B cell (primary cell): ENCODE measurements at regions of chr1 and their contacts with region 1.

Region 1: GRCh38 chr1:42335050-42335808 is at the start of gene FOXJ3:
- DNase-seq: peak; percentile 97
- ATAC-seq: peak; percentile 90
- H3K4me3 ChIP-seq: peak within 1 kb of the TSS; percentile 63 to 97 (median 89)
- H3K4me3 Mint-ChIP-seq: peak within 1 kb of the TSS; percentile 95
- H3K27ac ChIP-seq: peak within 1 kb of the TSS; percentile 75 to 91
- H3K27ac Mint-ChIP-seq: peak within 1 kb of the TSS; percentile 90
- H3K4me1 ChIP-seq: peaks cover 20 to 24% of the 10 kb centered on the region in 2 donors
- H3K4me1 Mint-ChIP-seq: peaks cover 44% of the 10 kb centered on the region
- H3K27me3 ChIP-seq: no peaks in the 10 kb centered on the region
- H3K27me3 Mint-ChIP-seq: no peaks in the 10 kb centered on the region
- CTCF ChIP-seq: no peak
- total RNA-seq, gene FOXJ3: 76.4 and 80.3 TPM in 2 replicates

Region 2: GRCh38 chr1:42035830-42036604 is 299.2 kb before region 1 on chr1:
- CTCF ChIA-PET with region 1: no interaction called
- POLR2A ChIA-PET with region 1: no interaction called
- intact Hi-C with region 1: loop called (anchors 5 kb)
- DNase-seq: peak; percentile 95
- ATAC-seq: peak; percentile 94
- H3K4me3 ChIP-seq: peak overlapping the region; percentile 13 to 93 (median 83)
- H3K4me3 Mint-ChIP-seq: peak overlapping the region; percentile 72
- H3K27ac ChIP-seq: peak overlapping the region in 1 of 2 donors; percentile 34
- H3K27ac Mint-ChIP-seq: peak overlapping the region; percentile 67
- H3K4me1 ChIP-seq: peaks cover 13 to 15% of the 10 kb centered on the region in 2 donors
- H3K4me1 Mint-ChIP-seq: peaks cover 12% of the 10 kb centered on the region
- H3K27me3 ChIP-seq: peaks cover 0 to 6% (median 0%) of the 10 kb centered on the region in 4 experiments
- H3K27me3 Mint-ChIP-seq: peaks cover 13% of the 10 kb centered on the region
- CTCF ChIP-seq: no peak

Region 3: DNA sequence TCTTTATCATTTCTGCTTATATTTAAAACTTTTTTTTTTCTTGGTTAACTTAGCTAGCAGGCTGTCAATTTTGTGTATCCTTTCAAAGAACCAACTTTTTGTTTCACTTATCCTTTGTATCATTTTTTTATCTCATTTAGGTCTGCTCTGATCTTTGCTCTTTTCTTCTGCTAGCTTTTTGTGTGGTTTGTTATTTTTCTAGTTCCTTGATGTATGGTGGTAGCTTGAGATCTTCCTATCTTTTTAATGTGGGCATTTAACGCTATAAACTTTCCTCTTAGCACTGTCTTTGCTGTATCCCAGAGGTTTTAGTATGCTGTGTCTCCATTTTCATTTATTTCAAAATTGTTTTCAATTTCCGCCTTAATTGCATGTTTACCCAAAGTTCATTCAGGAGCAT is 36.7 kb before region 1 on chr1:
- CTCF ChIA-PET with region 1: no interaction called
- POLR2A ChIA-PET with region 1: no interaction called
- intact Hi-C with region 1: no loop called
- DNase-seq: no peak
- ATAC-seq: no peak
- H3K4me3 ChIP-seq: no peak overlapping the region
- H3K4me3 Mint-ChIP-seq: no peak overlapping the region
- H3K27ac ChIP-seq: no peak overlapping the region
- H3K27ac Mint-ChIP-seq: no peak overlapping the region
- H3K4me1 ChIP-seq: no peaks in the 10 kb centered on the region
- H3K4me1 Mint-ChIP-seq: peaks cover 8% of the 10 kb centered on the region
- H3K27me3 ChIP-seq: no peaks in the 10 kb centered on the region
- H3K27me3 Mint-ChIP-seq: no peaks in the 10 kb centered on the region
- CTCF ChIP-seq: no peak

Region 4: GRCh38 chr1:42319128-42319851 is 15.9 kb before region 1 on chr1:
- CTCF ChIA-PET with region 1: no interaction called
- POLR2A ChIA-PET with region 1: no interaction called
- intact Hi-C with region 1: no loop called
- DNase-seq: no peak
- ATAC-seq: no peak
- H3K4me3 ChIP-seq: no peak overlapping the region
- H3K4me3 Mint-ChIP-seq: no peak overlapping the region
- H3K27ac ChIP-seq: peak overlapping the region in 1 of 2 donors; percentile 60
- H3K27ac Mint-ChIP-seq: no peak overlapping the region
- H3K4me1 ChIP-seq: peaks cover 14 to 18% of the 10 kb centered on the region in 2 donors
- H3K4me1 Mint-ChIP-seq: peaks cover 73% of the 10 kb centered on the region
- H3K27me3 ChIP-seq: no peaks in the 10 kb centered on the region
- H3K27me3 Mint-ChIP-seq: no peaks in the 10 kb centered on the region
- CTCF ChIP-seq: no peak

Region 5: DNA sequence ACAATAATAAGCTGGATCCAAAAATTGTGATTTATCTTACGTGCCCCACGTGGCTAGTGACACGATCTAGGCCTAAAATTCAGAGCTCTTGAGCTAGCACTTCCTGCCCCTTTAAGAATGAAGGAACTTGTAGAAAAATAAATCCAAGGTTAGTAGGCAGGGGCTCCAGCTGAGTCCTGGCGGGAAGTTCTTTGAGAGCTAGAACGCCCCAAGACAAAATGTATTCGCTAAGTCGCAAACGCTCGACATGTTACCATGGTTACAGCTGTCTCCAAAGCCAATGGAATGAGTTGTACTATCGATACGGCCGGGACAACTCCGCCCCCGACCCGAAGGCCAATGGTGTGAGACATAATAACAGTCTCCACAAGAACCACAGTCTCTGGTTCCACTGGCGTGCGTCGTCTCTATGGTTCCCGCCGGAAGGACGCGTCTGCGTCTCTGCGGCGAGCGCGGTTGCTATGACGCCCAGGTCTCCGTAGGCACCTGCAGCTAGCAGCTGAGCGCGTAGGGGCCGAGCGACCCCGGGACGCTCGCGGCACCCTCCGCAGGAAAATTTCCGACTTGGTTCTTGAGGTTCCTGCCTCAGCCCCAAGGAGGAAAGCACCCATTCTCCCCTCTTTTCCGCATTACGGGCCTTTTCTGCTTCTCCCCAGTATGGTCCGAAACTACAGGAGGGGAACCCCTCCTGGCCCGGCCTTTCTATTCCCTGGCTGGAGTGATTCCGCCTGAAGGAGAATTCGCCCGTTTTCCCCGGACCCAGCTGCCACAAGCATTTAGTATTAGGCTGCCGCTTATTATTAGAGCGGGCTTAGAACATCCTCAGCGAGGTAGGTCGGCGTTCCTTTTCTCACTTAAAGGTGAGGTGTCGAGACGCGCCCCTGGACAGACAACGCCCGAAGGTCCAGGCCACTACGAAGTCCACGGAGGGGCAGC is 127.9 kb after region 1 on chr1 and contains the start of gene CCDC30:
- CTCF ChIA-PET with region 1: interaction called, 3 read pairs
- POLR2A ChIA-PET with region 1: no interaction called
- intact Hi-C with region 1: loop called (anchors 1 kb)
- DNase-seq: peak; percentile 99
- ATAC-seq: peak; percentile 99
- H3K4me3 ChIP-seq: peak within 1 kb of the TSS; percentile 19 to 71 (median 65)
- H3K4me3 Mint-ChIP-seq: peak within 1 kb of the TSS; percentile 73
- H3K27ac ChIP-seq: peak within 1 kb of the TSS; percentile 70 to 84
- H3K27ac Mint-ChIP-seq: peak within 1 kb of the TSS; percentile 93
- H3K4me1 ChIP-seq: peaks cover 15 to 18% of the 10 kb centered on the region in 2 donors
- H3K4me1 Mint-ChIP-seq: peaks cover 40% of the 10 kb centered on the region
- H3K27me3 ChIP-seq: no peaks in the 10 kb centered on the region
- H3K27me3 Mint-ChIP-seq: no peaks in the 10 kb centered on the region
- CTCF ChIP-seq: no peak
- total RNA-seq, gene CCDC30: 7.4 and 9.8 TPM in 2 replicates

Region 6: GRCh38 chr1:42657971-42658879 is 323.0 kb after region 1 on chr1 and contains the start of gene PPIH:
- CTCF ChIA-PET with region 1: no interaction called
- POLR2A ChIA-PET with region 1: no interaction called
- intact Hi-C with region 1: loop called (anchors 1 kb)
- DNase-seq: peak; percentile 94
- ATAC-seq: peak; percentile 99
- H3K4me3 ChIP-seq: peak within 1 kb of the TSS; percentile 45 to 90 (median 84)
- H3K4me3 Mint-ChIP-seq: peak within 1 kb of the TSS; percentile 99
- H3K27ac ChIP-seq: peak within 1 kb of the TSS; percentile 62 to 76
- H3K27ac Mint-ChIP-seq: peak within 1 kb of the TSS; percentile 93
- H3K4me1 ChIP-seq: peaks cover 15 to 22% of the 10 kb centered on the region in 2 donors
- H3K4me1 Mint-ChIP-seq: peaks cover 32% of the 10 kb centered on the region
- H3K27me3 ChIP-seq: no peaks in the 10 kb centered on the region
- H3K27me3 Mint-ChIP-seq: no peaks in the 10 kb centered on the region
- CTCF ChIP-seq: no peak
- total RNA-seq, gene PPIH: 48.8 and 50.3 TPM in 2 replicates

Region 7: GRCh38 chr1:43206600-43207228 is 871.5 kb after region 1 on chr1:
- CTCF ChIA-PET with region 1: no interaction called
- POLR2A ChIA-PET with region 1: no interaction called
- intact Hi-C with region 1: no loop called
- DNase-seq: no peak
- ATAC-seq: no peak
- H3K4me3 ChIP-seq: no peak overlapping the region
- H3K4me3 Mint-ChIP-seq: no peak overlapping the region
- H3K27ac ChIP-seq: no peak overlapping the region
- H3K27ac Mint-ChIP-seq: no peak overlapping the region
- H3K4me1 ChIP-seq: peaks cover 0 to 4% of the 10 kb centered on the region in 2 donors
- H3K4me1 Mint-ChIP-seq: peaks cover 2% of the 10 kb centered on the region
- H3K27me3 ChIP-seq: no peaks in the 10 kb centered on the region
- H3K27me3 Mint-ChIP-seq: peaks cover 6% of the 10 kb centered on the region
- CTCF ChIP-seq: no peak